GM10248 (cell line): ENCODE measurements at regions of chr7 and their contacts with region 1.

Region 1: GRCh38 chr7:91034459-91035368 is 229.5 kb upstream of the FZD1 start:
- DNase-seq: peak; percentile 45
- CTCF ChIP-seq: peak; percentile 64

Region 2: GRCh38 chr7:90455163-90456030 is 579.3 kb before region 1 on chr7:
- CTCF ChIA-PET with region 1: interaction called, 30 read pairs
- POLR2A ChIA-PET with region 1: no interaction called
- DNase-seq: peak; percentile 48
- CTCF ChIP-seq: peak; percentile 65

Region 3: DNA sequence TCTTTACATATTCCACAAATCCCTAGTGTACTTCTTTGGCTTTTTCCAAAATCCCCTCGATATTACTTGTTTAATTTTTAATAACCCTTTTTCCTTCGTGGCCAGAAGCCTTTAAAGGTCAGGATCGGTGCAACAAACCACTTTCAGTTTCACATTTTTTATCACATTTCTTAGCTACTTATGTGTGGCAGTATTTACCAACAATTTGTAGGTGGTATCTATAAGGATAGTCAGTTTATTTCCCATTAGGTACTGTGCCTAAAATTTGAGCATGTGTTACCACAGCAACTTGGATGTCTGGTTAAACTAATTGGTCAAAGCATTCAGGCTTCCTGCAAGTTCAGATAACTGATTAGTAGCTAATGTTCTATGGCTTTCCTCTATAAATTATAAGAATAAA is 333.7 kb before region 1 on chr7:
- CTCF ChIA-PET with region 1: interaction called, 12 read pairs
- POLR2A ChIA-PET with region 1: no interaction called
- DNase-seq: peak; percentile 15
- CTCF ChIP-seq: no peak

Region 4: DNA sequence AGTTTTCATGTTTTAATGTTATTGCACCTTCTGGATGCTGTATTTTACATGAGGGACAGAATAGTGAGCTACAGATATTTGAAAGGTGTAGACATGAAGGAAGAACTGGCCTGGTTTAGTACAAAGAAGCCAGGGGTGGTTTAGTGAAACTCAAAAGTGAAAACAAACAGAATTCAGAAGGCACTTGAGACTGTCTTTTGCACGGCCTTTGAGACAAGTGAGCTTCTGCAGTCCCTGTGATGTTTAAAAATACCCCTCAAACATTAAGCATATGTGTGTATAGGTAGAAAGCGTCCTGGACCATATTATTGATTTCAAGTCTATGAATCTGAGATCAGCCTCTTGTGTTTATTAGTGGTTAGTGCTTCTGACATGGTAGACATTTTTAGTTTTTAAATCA is 319.6 kb before region 1 on chr7:
- CTCF ChIA-PET with region 1: interaction called, 43 read pairs
- POLR2A ChIA-PET with region 1: no interaction called
- DNase-seq: no peak
- CTCF ChIP-seq: no peak

Region 5: GRCh38 chr7:91020636-91021385 is 13.9 kb before region 1 on chr7:
- CTCF ChIA-PET with region 1: interaction called, 20 read pairs
- POLR2A ChIA-PET with region 1: no interaction called
- DNase-seq: no peak
- CTCF ChIP-seq: no peak

Region 6: GRCh38 chr7:91276909-91277308 is 242.2 kb after region 1 on chr7:
- CTCF ChIA-PET with region 1: no interaction called
- POLR2A ChIA-PET with region 1: no interaction called
- DNase-seq: no peak
- CTCF ChIP-seq: no peak

Region 7: GRCh38 chr7:91357901-91358300 is 323.2 kb after region 1 on chr7:
- CTCF ChIA-PET with region 1: no interaction called
- POLR2A ChIA-PET with region 1: no interaction called
- DNase-seq: no peak
- CTCF ChIP-seq: no peak